ENCODE measurements at regions of chr3 and their contacts with region 1.

Region 1: DNA sequence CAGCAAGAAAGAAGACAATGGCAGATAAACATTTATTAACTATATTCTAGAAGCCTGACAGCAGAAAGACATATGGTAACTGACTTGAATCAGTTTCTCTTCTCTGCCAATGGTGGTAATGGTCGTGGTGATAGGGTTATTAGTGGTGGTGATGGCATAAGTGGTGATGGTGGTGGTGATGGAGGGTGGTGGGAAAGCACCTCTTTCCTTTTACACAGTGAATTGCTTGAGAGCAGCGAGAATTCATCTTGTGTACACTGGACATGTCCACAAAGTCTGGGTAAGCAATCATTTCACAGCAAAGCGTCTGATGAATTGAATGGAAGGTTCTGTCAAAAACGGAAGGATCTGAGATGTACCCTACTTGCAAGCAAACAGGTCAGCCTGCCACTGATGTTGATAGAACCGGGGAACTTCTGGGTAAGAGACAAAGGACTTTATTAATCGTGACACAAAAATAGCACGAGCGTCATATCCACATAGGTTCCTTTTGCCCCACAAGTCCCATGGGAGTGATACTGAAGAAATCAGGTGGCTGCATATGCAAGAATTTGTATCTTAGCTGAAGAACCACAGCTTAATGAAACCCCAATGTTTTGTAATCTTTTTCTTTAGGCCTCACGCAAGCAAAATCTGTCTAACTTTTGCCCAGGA is 23.5 kb upstream of the TBC1D5 start:
- H3K4me3 Mint-ChIP-seq: no peak overlapping the region
- H3K27ac Mint-ChIP-seq: no peak overlapping the region
- H3K4me1 Mint-ChIP-seq: no peaks in the 10 kb centered on the region
- H3K27me3 Mint-ChIP-seq: no peaks in the 10 kb centered on the region

Region 2: DNA sequence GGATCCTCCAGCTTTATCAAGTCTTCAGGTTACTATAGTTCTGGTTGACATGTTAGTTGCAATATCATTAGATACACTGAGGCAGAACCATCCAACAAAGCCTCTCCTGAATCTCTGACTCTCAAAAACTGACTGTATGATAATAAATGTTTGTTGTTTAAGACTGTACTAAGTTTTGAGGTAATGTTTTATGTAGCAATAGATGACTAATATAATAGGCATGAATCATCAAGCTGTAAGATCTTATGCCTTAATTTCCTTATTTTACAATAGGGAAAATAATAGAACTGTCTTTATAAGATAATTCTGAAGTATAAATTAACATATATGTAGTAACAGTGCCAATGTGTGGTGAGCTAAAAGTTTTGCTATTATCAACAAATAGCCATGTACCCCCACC is 65.4 kb after region 1 on chr3:
- intact Hi-C with region 1: loop called (anchors 10 kb)
- H3K4me3 Mint-ChIP-seq: no peak overlapping the region
- H3K27ac Mint-ChIP-seq: no peak overlapping the region
- H3K4me1 Mint-ChIP-seq: peaks cover 7% of the 10 kb centered on the region
- H3K27me3 Mint-ChIP-seq: no peaks in the 10 kb centered on the region

Region 3: DNA sequence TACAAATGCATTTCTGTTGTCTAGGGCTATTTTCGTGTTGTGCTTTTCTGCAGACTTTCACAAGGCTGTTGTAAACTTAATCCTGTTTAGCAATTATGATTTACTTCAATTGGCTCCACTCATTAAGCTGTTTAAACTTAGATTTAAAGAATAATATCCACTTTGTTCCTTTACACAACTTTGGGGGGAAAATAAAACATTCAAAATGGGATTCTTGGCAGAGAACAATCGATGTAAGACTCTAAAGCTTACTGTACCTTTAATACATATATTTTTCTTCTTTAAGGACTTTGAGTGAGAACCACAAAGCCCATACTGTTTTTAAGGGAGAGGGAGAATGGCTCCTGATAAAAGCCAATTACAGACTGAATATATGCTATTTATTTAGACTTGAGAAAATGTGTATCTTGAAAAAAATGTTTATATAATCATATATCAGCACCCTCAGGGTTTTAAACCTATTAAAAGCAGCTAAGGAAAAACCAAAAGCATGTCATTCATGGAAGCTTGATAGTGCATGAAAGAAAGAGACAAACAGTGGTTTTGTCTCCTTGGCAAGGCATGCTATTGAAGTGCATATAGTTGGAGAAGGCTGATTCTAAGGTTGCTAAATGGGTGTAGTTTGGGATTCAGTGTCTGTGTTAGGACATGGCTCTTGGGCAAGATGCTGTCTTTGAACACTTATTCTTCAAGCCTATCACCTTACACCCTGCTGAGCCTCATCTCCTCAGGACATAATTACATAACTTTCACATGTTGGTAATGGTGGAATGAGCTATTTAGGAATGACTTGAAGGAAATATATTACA is 269.9 kb after region 1 on chr3:
- intact Hi-C with region 1: no loop called
- H3K4me3 Mint-ChIP-seq: no peak overlapping the region
- H3K27ac Mint-ChIP-seq: no peak overlapping the region
- H3K4me1 Mint-ChIP-seq: no peaks in the 10 kb centered on the region
- H3K27me3 Mint-ChIP-seq: no peaks in the 10 kb centered on the region

Measured in dendritic cell treated with granulocyte-macrophage colony-stimulating factor and Interleukin-4, amounts not matched to agents 40 ng/mL and 50 ng/mL, for 4 days (primary cell).